Colonic mucosa (tissue), 4 donors: ENCODE measurements at regions of chr10 and their contacts with region 1.

Region 1: DNA sequence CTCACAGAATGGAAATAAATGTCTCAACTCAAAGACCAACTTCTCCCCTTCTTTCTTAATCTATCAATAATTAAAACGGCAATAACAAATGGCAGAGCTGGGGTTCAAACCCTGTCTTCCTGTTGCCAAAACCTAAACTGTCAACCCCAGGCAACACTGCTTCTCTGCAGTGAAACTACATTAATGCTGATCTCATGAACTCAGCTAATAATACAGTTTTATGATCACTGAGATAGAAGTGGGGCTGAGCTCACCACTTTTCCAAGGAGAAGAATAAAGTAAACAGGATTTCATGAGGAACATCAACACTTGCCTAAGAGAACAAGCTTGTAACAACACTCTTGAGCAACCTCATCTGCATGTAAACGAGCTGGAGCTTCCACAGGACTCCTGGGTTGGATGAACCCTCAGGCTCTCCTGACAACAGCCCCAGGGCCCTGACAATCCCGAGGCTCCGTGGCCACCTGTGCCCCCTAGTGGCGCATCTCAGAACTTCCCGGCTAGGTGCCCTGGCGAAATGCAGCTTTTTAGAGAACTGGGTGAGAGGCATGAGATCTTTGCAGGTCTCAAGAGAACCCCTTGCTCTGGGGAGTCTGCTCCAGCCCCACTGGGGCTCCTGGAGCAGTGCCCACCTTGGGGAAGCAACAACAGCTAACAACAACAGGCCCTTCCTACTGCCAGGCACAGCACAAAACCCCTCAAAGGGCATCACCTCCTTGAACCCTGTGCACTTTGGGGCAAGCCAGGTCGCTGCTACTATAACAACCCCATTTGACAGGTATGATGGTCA is 169.3 kb downstream of the SH3PXD2A start:
- DNase-seq: peak; percentile 88
- H3K4me3 ChIP-seq: no peak overlapping the region
- H3K27ac ChIP-seq: peak overlapping the region; percentile 35
- H3K4me1 ChIP-seq: peaks cover 2% of the 10 kb centered on the region
- H3K27me3 ChIP-seq: no peaks in the 10 kb centered on the region
- CTCF ChIP-seq: peak; percentile 97

Region 2: DNA sequence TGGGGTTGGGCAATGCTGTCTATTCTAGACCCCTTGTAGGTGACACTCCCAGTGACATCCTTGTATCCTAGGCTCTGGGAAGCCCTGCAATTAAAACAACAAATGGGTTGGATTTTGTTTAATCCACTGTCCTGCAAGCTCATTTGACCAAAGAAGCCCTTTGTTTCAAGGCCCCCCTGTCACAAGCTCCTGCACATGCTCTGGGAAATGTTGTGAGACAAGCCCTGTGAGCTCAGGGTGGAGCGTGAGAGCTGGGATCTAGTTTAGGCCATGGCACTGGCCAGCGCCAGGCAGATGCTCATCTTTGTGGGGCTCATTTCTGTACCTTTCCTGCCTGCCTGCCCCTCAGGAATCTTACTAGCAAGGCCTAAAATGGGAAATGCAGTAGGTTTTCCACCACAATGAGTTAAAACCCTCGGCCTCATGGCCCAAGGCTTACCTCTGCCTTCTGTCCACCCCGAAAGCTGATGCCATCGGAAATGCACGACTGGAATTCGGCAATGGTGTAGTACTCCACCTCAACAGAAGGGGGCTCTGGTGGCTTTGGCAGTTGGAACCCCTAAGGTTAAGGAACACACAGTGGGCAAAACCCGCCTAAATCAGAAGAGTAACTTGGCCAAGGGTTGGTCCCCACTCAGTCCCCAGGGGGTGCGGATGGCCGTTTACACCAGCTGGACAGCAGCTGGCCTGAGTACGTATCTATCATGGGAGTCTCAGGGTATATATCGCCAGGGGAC is 80.5 kb before region 1 on chr10:
- intact Hi-C with region 1: loop called (anchors 2 kb)
- DNase-seq: peak; percentile 68
- H3K4me3 ChIP-seq: no peak overlapping the region
- H3K27ac ChIP-seq: no peak overlapping the region
- H3K4me1 ChIP-seq: no peaks in the 10 kb centered on the region
- H3K27me3 ChIP-seq: no peaks in the 10 kb centered on the region
- CTCF ChIP-seq: peak; percentile 64